Adrenal gland (tissue), 19 donors: ENCODE measurements at regions of chr1 and their contacts with region 1.

Region 1: GRCh38 chr1:58999676-59000075 is 215.8 kb upstream of the JUN start:
- DNase-seq: peak in 1 of 7 donors; percentile 29
- H3K4me3 ChIP-seq: no peak overlapping the region
- H3K27ac ChIP-seq: no peak overlapping the region
- H3K4me1 ChIP-seq: no peaks in the 10 kb centered on the region
- H3K27me3 ChIP-seq: no peaks in the 10 kb centered on the region
- CTCF ChIP-seq: no peak
- POLR2A ChIP-seq: no peak

Region 2: DNA sequence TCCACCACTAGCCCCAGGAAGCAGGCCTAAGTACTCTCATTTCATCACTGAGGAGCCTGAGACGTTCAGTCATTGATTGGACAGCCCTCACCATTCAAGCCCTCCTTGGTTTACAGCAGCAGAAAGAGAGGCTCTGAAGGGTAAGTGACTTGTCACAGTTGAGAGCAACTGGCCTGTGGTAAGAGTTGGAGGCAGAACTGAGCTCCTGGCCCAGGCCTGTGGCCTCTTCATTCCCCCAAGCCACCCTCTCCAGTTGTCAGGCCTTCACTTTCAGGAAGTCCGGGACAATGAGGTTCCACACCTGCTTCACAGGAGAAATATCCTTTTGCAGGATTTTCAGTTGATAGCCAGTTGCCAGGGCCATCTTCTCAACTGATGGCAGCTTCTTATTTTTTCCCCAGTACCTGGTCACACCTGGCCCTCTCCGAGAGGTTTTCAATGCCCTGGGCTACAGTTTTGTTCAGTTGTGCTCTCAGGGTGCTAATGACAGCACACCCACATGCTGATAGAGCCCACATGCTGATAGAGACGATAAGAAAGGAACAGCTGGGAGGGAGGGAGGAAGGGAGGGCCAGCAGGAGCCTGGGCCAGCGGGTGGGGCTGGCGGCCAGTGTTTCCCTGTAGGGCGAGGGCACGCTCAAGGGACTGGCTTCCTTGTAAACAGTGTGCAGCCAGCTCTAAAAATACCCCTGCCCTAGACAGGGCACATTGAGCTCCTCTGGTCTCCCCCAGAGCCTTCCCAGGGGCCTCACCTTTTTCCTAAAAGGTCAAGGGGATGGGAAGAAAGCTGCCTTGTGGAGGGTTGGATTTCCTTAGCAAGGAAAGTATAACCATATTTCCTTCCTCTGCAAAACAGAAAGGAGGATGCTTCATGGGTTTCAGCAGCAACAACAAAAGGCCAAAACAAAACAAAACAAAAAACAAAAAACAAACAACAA is 103.2 kb before region 1 on chr1:
- intact Hi-C with region 1: no loop called
- DNase-seq: peak; percentile 46 to 76 (median 71)
- H3K4me3 ChIP-seq: no peak overlapping the region
- H3K27ac ChIP-seq: peak overlapping the region in 4 of 5 donors; percentile 6 to 82 (median 49)
- H3K4me1 ChIP-seq: peaks cover 25 to 51% of the 10 kb centered on the region in 2 donors
- H3K27me3 ChIP-seq: no peaks in the 10 kb centered on the region
- CTCF ChIP-seq: no peak
- POLR2A ChIP-seq: no peak

Region 3: DNA sequence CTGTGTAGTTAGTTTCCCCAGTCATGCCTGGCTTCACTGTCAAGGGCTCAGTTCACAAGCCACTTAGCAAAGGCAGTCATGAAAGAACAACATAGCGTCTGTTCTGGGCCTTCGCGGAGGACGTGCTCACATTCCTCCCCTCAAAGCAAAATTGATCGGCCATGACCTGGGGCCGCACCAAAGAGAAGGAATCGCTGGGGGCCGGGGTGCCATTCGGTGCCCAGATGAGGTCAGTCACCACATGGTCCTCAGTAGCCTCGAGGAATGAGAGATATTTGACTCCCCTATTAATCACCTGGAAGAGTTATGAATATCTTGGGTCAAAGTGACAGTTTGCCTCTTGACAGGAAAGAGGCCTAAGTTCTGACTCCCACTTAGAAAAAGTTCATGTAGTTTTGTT is 35.2 kb after region 1 on chr1:
- intact Hi-C with region 1: loop called in 1 of 2 experiments (anchors 2 kb)
- DNase-seq: no peak
- H3K4me3 ChIP-seq: no peak overlapping the region
- H3K27ac ChIP-seq: no peak overlapping the region
- H3K4me1 ChIP-seq: no peaks in the 10 kb centered on the region
- H3K27me3 ChIP-seq: no peaks in the 10 kb centered on the region
- CTCF ChIP-seq: no peak
- POLR2A ChIP-seq: no peak